ENCODE measurements at regions of chr1 and their contacts with region 1.

Region 1: GRCh38 chr1:8554956-8555534 is 237.1 kb downstream of the SLC45A1 start:
- DNase-seq: no peak
- ATAC-seq: no peak
- H3K4me3 ChIP-seq: no peak overlapping the region
- H3K27ac ChIP-seq: no peak overlapping the region
- H3K4me1 ChIP-seq: peaks cover 6% of the 10 kb centered on the region
- H3K27me3 ChIP-seq: no peaks in the 10 kb centered on the region
- CTCF ChIP-seq: no peak

Region 2: GRCh38 chr1:8727809-8728213 is 172.8 kb after region 1 on chr1:
- intact Hi-C with region 1: loop called (anchors 10 kb)
- DNase-seq: no peak
- ATAC-seq: no peak
- H3K4me3 ChIP-seq: no peak overlapping the region
- H3K27ac ChIP-seq: no peak overlapping the region
- H3K4me1 ChIP-seq: peaks cover 12% of the 10 kb centered on the region
- H3K27me3 ChIP-seq: no peaks in the 10 kb centered on the region
- CTCF ChIP-seq: no peak